ENCODE measurements at regions of chr1 and their contacts with region 1.

Region 1: GRCh38 chr1:1615256-1616044 is at the start of gene MIB2:
- H3K4me3 Mint-ChIP-seq: peak within 1 kb of the TSS; percentile 88
- H3K27ac Mint-ChIP-seq: peak within 1 kb of the TSS; percentile 93
- H3K4me1 Mint-ChIP-seq: peaks cover 42% of the 10 kb centered on the region
- H3K27me3 Mint-ChIP-seq: no peaks in the 10 kb centered on the region

Region 2: GRCh38 chr1:1511533-1512285 is 103.7 kb before region 1 on chr1 and contains the start of gene ATAD3A:
- intact Hi-C with region 1: loop called (anchors 5 kb)
- H3K4me3 Mint-ChIP-seq: peak within 1 kb of the TSS; percentile 91
- H3K27ac Mint-ChIP-seq: peak within 1 kb of the TSS; percentile 89
- H3K4me1 Mint-ChIP-seq: peaks cover 14% of the 10 kb centered on the region
- H3K27me3 Mint-ChIP-seq: no peaks in the 10 kb centered on the region

Region 3: GRCh38 chr1:1564268-1564667 is 51.2 kb before region 1 on chr1:
- intact Hi-C with region 1: no loop called
- H3K4me3 Mint-ChIP-seq: no peak overlapping the region
- H3K27ac Mint-ChIP-seq: no peak overlapping the region
- H3K4me1 Mint-ChIP-seq: peaks cover 12% of the 10 kb centered on the region
- H3K27me3 Mint-ChIP-seq: no peaks in the 10 kb centered on the region

Region 4: DNA sequence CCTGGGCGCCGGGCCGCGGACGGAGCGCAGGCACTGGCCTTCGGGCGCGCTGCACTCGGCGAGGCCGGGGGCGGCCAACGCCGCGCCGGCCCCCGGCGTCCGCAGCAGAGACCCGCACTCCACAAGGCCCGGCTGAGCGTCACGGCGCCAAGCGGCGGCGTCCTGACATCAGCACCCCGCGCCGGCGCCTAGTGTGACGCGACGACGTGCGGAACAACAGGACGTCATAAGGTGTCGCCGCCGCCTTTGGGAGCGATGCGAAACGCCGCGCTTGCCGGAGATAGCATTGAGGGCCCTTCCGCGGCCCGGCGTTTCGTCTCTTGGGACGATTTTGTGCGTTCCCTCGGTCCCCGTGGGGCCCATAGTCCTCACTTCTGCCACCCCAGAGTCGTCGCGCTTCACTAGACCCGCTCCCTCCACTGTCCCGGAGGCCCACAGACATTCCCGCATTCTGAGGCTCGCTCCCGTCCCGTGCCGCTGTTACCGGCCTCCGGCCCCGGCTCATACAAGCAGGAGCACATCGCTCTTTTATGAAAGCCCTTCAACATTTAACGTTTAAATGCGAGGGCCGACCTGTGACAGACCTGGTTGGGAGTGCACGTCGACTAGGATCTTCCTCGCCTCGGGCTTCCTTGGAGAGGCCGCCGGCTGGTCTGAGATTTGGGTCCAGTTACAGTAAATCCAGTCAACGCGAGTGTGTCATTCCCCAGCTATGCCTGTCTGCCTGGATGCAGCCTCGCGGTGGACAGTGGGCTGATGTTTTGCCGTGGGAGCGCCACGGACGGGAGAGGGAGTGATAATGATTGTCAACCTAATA is 40.5 kb before region 1 on chr1 and contains the start of gene SSU72:
- intact Hi-C with region 1: loop called (anchors 1 kb)
- H3K4me3 Mint-ChIP-seq: peak within 1 kb of the TSS; percentile 93
- H3K27ac Mint-ChIP-seq: peak within 1 kb of the TSS; percentile 98
- H3K4me1 Mint-ChIP-seq: peaks cover 27% of the 10 kb centered on the region
- H3K27me3 Mint-ChIP-seq: peaks cover 17% of the 10 kb centered on the region

Region 5: DNA sequence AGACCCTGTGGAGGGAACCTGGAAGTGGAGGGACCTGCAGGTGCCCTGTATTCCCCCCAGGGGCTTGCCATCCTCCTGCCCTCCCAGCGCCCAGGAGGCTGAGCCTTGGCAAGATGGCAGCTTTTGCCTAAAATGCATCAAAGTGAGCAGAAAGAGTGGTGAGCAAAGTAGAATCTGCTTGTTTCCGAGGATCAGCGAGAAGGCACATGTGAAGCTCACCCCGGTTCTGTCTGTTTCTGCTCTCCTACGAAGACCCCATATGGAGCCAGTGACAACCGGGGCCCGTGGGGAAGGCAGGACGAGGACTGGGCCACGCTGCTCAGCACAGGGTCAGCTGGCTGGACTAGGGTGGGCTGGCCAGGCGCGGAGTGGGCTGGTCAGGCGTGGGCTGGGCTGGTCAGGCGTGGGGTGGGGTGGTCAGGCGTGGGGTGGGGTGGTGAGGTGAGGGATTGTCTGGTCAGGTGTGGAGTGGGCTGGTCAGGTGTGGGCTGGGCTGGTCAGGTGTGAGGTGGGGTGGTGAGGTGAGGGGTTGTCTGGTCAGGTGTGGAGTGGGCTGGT is 10.3 kb before region 1 on chr1:
- intact Hi-C with region 1: loop called (anchors 1 kb)
- H3K4me3 Mint-ChIP-seq: no peak overlapping the region
- H3K27ac Mint-ChIP-seq: peak overlapping the region; percentile 41
- H3K4me1 Mint-ChIP-seq: peaks cover 42% of the 10 kb centered on the region
- H3K27me3 Mint-ChIP-seq: peaks cover 2% of the 10 kb centered on the region

Region 6: DNA sequence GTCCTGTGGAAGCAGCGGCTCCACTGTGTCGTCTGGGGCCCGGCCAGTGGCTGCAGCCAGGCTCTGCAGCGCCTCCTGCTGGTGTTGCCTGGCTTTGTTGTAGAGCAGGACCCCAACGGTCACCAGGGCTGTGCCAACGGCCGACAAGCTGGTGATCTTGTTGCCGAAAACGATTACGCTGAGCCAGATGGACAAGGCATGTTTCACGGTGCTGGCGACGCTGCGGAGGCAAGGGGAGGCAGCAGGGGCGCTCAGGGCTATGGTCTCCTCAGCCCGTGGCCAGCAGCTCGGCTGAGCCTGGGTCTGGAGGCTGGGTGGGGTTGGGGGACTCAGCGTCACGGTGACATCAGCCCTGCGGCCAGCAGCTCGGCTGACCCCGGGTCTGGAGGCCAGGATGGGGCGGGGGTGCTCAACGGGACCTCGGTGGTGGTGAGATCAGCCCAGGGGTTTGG is 50.4 kb after region 1 on chr1:
- intact Hi-C with region 1: no loop called
- H3K4me3 Mint-ChIP-seq: no peak overlapping the region
- H3K27ac Mint-ChIP-seq: no peak overlapping the region
- H3K4me1 Mint-ChIP-seq: no peaks in the 10 kb centered on the region
- H3K27me3 Mint-ChIP-seq: no peaks in the 10 kb centered on the region